ENCODE measurements at regions of chr13 and their contacts with region 1.

Region 1: GRCh38 chr13:29428310-29429181 is 166.9 kb downstream of the SLC7A1 start:
- DNase-seq: peak in 1 of 2 donors; percentile 68
- H3K4me3 ChIP-seq: peak overlapping the region; percentile 46 to 76
- H3K27ac ChIP-seq: peak overlapping the region; percentile 72 to 77
- H3K4me1 ChIP-seq: peaks cover 0 to 6% of the 10 kb centered on the region in 2 donors
- H3K27me3 ChIP-seq: no peaks in the 10 kb centered on the region
- CTCF ChIP-seq: peak in 1 of 3 experiments; percentile 22

Region 2: GRCh38 chr13:29472332-29472961 is 43.9 kb after region 1 on chr13:
- intact Hi-C with region 1: loop called (anchors 1 kb)
- DNase-seq: peak in 1 of 2 donors; percentile 70
- H3K4me3 ChIP-seq: no peak overlapping the region
- H3K27ac ChIP-seq: no peak overlapping the region
- H3K4me1 ChIP-seq: no peaks in the 10 kb centered on the region
- H3K27me3 ChIP-seq: no peaks in the 10 kb centered on the region
- CTCF ChIP-seq: peak; percentile 23 to 75 (median 61)

Measured in ascending aorta (tissue), 2 donors.